AG04450 (cell line): ENCODE measurements at regions of chr3 and their contacts with region 1.

Region 1: GRCh38 chr3:45210308-45211041 is 15.6 kb downstream of the TMEM158 start:
- DNase-seq: peak; percentile 63
- H3K4me3 ChIP-seq: no peak overlapping the region
- H3K27ac ChIP-seq: no peak overlapping the region
- H3K27me3 ChIP-seq: no peaks in the 10 kb centered on the region
- CTCF ChIP-seq: peak; percentile 84

Region 2: DNA sequence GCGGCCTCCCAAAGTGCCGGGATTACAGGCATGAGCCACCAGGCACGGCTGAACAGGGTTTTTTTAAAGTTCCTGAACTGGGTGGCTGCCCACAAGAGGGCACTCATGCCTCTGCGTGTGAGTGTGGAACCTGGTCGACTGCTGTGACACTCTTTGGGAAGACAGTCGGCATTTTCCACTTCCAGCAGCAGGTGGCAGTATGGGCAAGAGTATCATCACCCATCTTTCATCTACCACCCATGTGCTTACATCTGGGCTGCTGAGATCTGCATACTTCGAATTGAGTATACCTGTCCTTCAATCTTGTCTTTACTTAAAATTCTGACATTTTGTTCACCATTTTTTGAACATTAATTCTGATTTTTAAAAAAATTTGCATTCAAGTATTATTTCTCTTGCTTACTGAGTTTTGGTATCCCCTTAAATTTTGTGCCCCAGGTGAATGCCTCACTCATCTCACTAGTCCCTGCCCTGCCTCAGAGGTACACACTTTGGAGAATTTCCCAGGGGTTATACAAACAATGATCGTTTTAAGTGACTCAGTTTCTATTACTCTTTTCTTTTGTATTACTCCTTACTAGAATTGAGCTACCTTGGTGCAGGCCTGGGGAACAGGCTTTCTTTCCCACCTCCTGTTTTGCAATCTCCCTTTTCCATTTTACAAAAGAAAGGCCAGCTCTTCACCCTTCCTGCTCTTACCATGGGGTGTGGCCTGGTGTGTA is 172.6 kb before region 1 on chr3:
- CTCF ChIA-PET with region 1: interaction called, 141 read pairs
- POLR2A ChIA-PET with region 1: interaction called, 4 read pairs
- DNase-seq: peak; percentile 87
- H3K4me3 ChIP-seq: no peak overlapping the region
- H3K27ac ChIP-seq: no peak overlapping the region
- H3K27me3 ChIP-seq: no peaks in the 10 kb centered on the region
- CTCF ChIP-seq: peak; percentile 89

Region 3: DNA sequence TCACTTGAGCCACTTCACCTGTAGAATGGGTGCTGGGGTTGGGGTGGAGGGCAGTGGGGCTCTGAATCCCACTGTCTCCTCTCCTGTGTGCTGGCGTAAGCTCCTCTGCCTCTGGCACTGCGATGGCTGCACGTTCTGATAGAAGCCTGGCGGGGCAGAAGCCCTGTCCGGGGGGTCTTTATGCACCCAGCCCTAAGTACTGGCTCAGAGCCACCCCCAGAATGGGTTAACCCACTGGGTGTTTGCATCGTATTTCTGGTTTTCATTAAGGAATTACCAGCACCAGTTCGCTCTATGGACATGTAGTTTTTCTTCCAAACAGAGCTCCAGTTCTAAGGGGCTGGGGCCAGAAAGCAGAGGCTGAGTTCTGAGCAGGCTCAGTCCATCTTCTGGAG is 26.6 kb before region 1 on chr3:
- CTCF ChIA-PET with region 1: no interaction called
- POLR2A ChIA-PET with region 1: no interaction called
- DNase-seq: no peak
- H3K4me3 ChIP-seq: no peak overlapping the region
- H3K27ac ChIP-seq: peak overlapping the region; percentile 83
- H3K27me3 ChIP-seq: no peaks in the 10 kb centered on the region
- CTCF ChIP-seq: no peak